OCI-LY7 (cell line): ENCODE measurements at regions of chr17 and their contacts with region 1.

Region 1: GRCh38 chr17:7234083-7234951 is at the start of gene DVL2:
- DNase-seq: peak; percentile 96
- H3K4me3 ChIP-seq: peak within 1 kb of the TSS; percentile 97
- H3K27ac ChIP-seq: peak within 1 kb of the TSS; percentile 65
- H3K4me1 ChIP-seq: peaks cover 40% of the 10 kb centered on the region
- CTCF ChIP-seq: no peak
- total RNA-seq, gene DVL2: 84.3 and 98.8 TPM in 2 replicates

Region 2: DNA sequence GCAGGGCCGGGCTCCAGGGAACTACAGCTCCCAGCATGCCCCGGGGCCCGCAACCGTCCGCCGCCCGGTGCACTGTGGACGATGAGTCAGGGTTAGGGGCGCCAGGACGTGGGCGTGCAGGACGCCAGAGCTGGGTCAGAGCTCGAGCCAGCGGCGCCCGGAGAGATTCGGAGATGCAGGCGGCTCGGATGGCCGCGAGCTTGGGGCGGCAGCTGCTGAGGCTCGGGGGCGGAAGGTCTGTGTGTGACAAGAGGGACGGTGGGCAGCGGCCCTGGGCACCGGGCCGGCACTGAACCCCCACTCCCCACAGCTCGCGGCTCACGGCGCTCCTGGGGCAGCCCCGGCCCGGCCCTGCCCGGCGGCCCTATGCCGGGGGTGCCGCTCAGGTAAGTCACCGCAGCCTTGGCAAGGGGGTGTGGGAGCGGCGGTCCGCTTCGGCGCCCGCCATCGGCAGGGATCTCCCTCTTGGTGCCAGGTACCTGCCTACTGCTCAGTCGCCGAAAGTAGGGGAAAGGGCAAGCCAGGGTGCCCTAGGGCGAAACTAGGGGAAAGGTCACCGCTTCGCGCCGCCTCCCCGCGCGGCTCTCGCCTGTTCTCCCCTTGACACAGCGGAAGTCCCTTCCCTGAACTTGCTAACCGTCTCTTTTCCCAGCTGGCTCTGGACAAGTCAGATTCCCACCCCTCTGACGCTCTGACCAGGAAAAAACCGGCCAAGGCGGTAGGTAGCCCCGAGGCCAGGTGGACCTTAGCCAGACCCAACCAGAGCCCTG is 14.3 kb before region 1 on chr17 and contains the starts of genes ACADVL and DLG4:
- CTCF ChIA-PET with region 1: interaction called, 7 read pairs
- POLR2A ChIA-PET with region 1: no interaction called
- intact Hi-C with region 1: loop called (anchors 1 kb)
- DNase-seq: peak; percentile 81
- H3K4me3 ChIP-seq: peak within 1 kb of the TSS; percentile 78
- H3K27ac ChIP-seq: peak within 1 kb of the TSS; percentile 71
- H3K4me1 ChIP-seq: peaks cover 51% of the 10 kb centered on the region
- CTCF ChIP-seq: no peak
- total RNA-seq, gene ACADVL: 226 and 297 TPM in 2 replicates
- total RNA-seq, gene DLG4: 9.0 and 15.4 TPM in 2 replicates

Region 3: GRCh38 chr17:7281953-7282751 is 47.8 kb after region 1 on chr17:
- CTCF ChIA-PET with region 1: no interaction called
- POLR2A ChIA-PET with region 1: no interaction called
- intact Hi-C with region 1: no loop called
- DNase-seq: no peak
- H3K4me3 ChIP-seq: peak overlapping the region; percentile 59
- H3K27ac ChIP-seq: no peak overlapping the region
- H3K4me1 ChIP-seq: peaks cover 41% of the 10 kb centered on the region
- CTCF ChIP-seq: no peak